CD8-positive, alpha-beta T cell (primary cell): ENCODE measurements at regions of chr1 and their contacts with region 1.

Region 1: GRCh38 chr1:226457307-226457712 is 49.4 kb upstream of the PARP1 start:
- DNase-seq: peak; percentile 9 to 79 (median 60)
- ATAC-seq: peak; percentile 89
- H3K4me3 ChIP-seq: peak overlapping the region; percentile 25 to 56
- H3K4me3 Mint-ChIP-seq: peak overlapping the region; percentile 84
- H3K27ac ChIP-seq: no peak overlapping the region
- H3K27ac Mint-ChIP-seq: peak overlapping the region; percentile 77
- H3K4me1 ChIP-seq: peaks cover 17% of the 10 kb centered on the region
- H3K4me1 Mint-ChIP-seq: peaks cover 15% of the 10 kb centered on the region
- H3K27me3 ChIP-seq: no peaks in the 10 kb centered on the region
- H3K27me3 Mint-ChIP-seq: no peaks in the 10 kb centered on the region
- CTCF ChIP-seq: peak; percentile 51

Region 2: DNA sequence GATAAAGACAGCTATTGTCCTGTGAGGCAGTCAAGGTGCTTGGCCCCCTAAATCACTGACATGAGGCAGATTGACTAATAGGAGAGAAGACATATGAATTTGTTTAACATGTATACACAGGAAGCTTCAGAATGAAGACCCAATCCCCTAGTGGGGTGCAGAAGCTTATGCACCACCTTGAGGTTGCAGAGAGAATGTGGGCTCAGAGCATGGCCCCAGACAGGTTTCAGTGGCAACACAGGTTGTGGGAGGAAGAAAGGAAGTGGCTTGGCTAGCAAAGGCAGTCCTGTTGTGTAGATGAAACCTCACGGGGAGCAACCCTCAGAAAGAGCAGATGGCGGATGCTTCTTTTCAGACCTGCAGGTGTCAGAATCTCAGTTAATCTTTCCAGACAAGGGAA is 12.4 kb before region 1 on chr1:
- CTCF ChIA-PET with region 1: interaction called, 11 read pairs
- POLR2A ChIA-PET with region 1: interaction called, 9 read pairs
- intact Hi-C with region 1: loop called in 1 of 2 experiments (anchors 1 kb)
- DNase-seq: peak; percentile 35 to 88 (median 68)
- ATAC-seq: peak; percentile 99
- H3K4me3 ChIP-seq: no peak overlapping the region
- H3K4me3 Mint-ChIP-seq: peak overlapping the region; percentile 12
- H3K27ac ChIP-seq: peak overlapping the region in 1 of 2 experiments; percentile 7
- H3K27ac Mint-ChIP-seq: peak overlapping the region; percentile 80
- H3K4me1 ChIP-seq: peaks cover 34% of the 10 kb centered on the region
- H3K4me1 Mint-ChIP-seq: peaks cover 35% of the 10 kb centered on the region
- H3K27me3 ChIP-seq: no peaks in the 10 kb centered on the region
- H3K27me3 Mint-ChIP-seq: no peaks in the 10 kb centered on the region
- CTCF ChIP-seq: peak; percentile 44

Region 3: DNA sequence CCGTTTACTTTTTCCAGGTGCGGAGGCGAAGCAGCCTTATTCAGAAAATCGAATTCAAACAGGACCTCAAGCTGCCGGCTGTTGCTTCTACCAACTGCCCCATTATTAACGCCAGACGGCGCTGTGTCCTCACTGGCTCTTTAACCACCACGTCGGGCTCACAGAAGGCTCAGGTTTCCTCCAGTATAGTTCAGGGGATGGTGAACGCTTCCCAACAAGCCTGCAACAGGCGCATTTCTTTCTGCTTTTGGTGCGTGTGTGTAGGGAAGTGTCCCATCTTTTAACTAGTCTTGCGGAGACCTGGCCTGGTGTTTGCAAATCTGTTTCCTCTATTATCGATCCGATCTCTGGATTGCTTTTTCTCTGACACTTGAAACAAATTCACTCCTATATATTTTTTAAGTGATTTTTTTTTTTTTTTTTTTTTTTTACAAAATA is 90.5 kb after region 1 on chr1:
- CTCF ChIA-PET with region 1: interaction called, 3 read pairs
- POLR2A ChIA-PET with region 1: interaction called, 5 read pairs
- intact Hi-C with region 1: loop called (anchors 5 to 10 kb)
- DNase-seq: peak; percentile 34 to 78 (median 56)
- ATAC-seq: peak; percentile 43
- H3K4me3 ChIP-seq: no peak overlapping the region
- H3K4me3 Mint-ChIP-seq: peak overlapping the region; percentile 58
- H3K27ac ChIP-seq: no peak overlapping the region
- H3K27ac Mint-ChIP-seq: no peak overlapping the region
- H3K4me1 ChIP-seq: peaks cover 20% of the 10 kb centered on the region
- H3K4me1 Mint-ChIP-seq: peaks cover 23% of the 10 kb centered on the region
- H3K27me3 ChIP-seq: peaks cover 6 to 18% of the 10 kb centered on the region in 2 experiments
- H3K27me3 Mint-ChIP-seq: peaks cover 25% of the 10 kb centered on the region
- CTCF ChIP-seq: peak; percentile 62

Region 4: GRCh38 chr1:226608699-226609505 is 151.6 kb after region 1 on chr1:
- CTCF ChIA-PET with region 1: interaction called, 13 read pairs
- POLR2A ChIA-PET with region 1: no interaction called
- intact Hi-C with region 1: no loop called
- DNase-seq: peak; percentile 33 to 81 (median 70)
- ATAC-seq: peak; percentile 77
- H3K4me3 ChIP-seq: no peak overlapping the region
- H3K4me3 Mint-ChIP-seq: no peak overlapping the region
- H3K27ac ChIP-seq: no peak overlapping the region
- H3K27ac Mint-ChIP-seq: no peak overlapping the region
- H3K4me1 ChIP-seq: no peaks in the 10 kb centered on the region
- H3K4me1 Mint-ChIP-seq: no peaks in the 10 kb centered on the region
- H3K27me3 ChIP-seq: peaks cover 0 to 4% of the 10 kb centered on the region in 2 experiments
- H3K27me3 Mint-ChIP-seq: peaks cover 3% of the 10 kb centered on the region
- CTCF ChIP-seq: peak; percentile 77